Breast epithelium (tissue), 4 donors: ENCODE measurements at regions of chr7 and their contacts with region 1.

Region 1: DNA sequence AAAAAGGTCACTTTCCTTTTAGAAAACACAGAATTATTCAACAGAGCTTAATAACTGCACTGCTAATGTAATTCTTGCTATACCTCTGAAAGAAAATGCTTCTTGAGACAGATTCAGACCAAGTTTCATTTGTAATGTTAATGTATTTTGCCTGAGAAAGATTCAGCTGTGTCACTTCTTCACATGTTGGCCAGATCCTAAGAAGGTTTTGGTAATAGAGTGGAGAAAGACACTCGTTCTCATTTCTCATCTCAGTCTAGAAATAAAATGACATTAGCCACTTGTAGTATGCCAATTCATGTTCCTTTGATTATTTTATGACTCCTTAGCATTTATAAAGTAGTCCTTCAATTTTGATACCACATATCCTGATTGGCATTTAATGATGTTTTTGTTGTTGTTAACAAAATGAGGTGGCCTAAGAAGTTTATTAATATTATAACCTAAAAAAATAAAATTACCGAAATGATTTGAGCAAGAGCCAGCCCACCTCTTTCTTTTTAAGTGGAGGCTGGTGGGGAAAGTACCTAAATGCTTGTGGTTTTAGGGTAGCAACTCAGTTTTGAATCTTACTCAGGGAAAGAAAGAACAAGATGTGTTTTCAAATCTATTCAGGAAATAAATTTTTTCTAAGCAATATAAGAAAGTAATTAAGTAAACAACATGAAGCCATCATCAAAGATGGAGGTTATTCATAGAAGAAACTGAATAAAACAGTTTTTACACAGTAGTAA is 16.4 kb upstream of the ELAPOR2 start:
- DNase-seq: no peak
- H3K4me3 ChIP-seq: no peak overlapping the region
- H3K27ac ChIP-seq: no peak overlapping the region
- H3K4me1 ChIP-seq: no peaks in the 10 kb centered on the region
- H3K27me3 ChIP-seq: no peaks in the 10 kb centered on the region
- CTCF ChIP-seq: no peak
- POLR2A ChIP-seq: no peak

Region 2: GRCh38 chr7:87038993-87039716 is 36.7 kb before region 1 on chr7:
- intact Hi-C with region 1: loop called (anchors 1 kb)
- DNase-seq: no peak
- H3K4me3 ChIP-seq: peak overlapping the region; percentile 9 to 49 (median 32)
- H3K27ac ChIP-seq: no peak overlapping the region
- H3K4me1 ChIP-seq: no peaks in the 10 kb centered on the region
- H3K27me3 ChIP-seq: no peaks in the 10 kb centered on the region
- CTCF ChIP-seq: no peak
- POLR2A ChIP-seq: no peak

Region 3: DNA sequence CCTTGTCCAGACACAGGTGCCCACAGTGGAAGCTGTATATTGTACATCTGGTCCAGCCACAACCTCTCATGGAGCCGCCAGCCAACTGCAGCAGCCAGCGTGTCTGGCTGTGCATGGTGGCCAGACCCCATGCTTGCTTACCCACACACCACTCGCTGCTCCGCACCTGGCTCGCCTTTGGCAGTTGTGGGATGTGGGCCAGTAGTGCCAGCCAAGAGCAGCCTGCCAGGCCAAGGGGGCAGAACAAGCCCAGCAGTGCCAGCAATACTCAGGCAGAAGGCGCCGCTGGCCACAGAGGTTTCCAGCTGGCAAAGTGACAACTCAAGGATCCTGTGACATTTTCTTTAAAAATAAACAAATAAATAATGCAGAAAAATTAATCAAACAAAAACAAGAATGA is 155.4 kb after region 1 on chr7:
- intact Hi-C with region 1: no loop called
- DNase-seq: peak in 1 of 2 donors; percentile 22
- H3K4me3 ChIP-seq: no peak overlapping the region
- H3K27ac ChIP-seq: no peak overlapping the region
- H3K4me1 ChIP-seq: peaks cover 0 to 5% of the 10 kb centered on the region in 2 donors
- H3K27me3 ChIP-seq: no peaks in the 10 kb centered on the region
- CTCF ChIP-seq: no peak
- POLR2A ChIP-seq: no peak